ENCODE measurements at regions of chr12 and their contacts with region 1.

Region 1: GRCh38 chr12:15856097-15856982 is 25.8 kb upstream of the STRAP start:
- DNase-seq: peak in 3 of 5 donors; percentile 34 to 55 (median 50)
- H3K4me3 ChIP-seq: no peak overlapping the region
- H3K4me3 Mint-ChIP-seq: no peak overlapping the region
- H3K27ac ChIP-seq: no peak overlapping the region
- H3K27ac Mint-ChIP-seq: no peak overlapping the region
- H3K4me1 ChIP-seq: no peaks in the 10 kb centered on the region
- H3K4me1 Mint-ChIP-seq: no peaks in the 10 kb centered on the region
- H3K27me3 ChIP-seq: peaks cover 10% of the 10 kb centered on the region
- H3K27me3 Mint-ChIP-seq: peaks cover 10 to 30% of the 10 kb centered on the region in 2 donors

Region 2: GRCh38 chr12:15322164-15323061 is 533.9 kb before region 1 on chr12 and contains the start of gene PTPRO:
- CTCF ChIA-PET with region 1: no interaction called
- POLR2A ChIA-PET with region 1: no interaction called
- DNase-seq: no peak
- H3K4me3 ChIP-seq: no peak within 1 kb of the TSS
- H3K4me3 Mint-ChIP-seq: no peak within 1 kb of the TSS
- H3K27ac ChIP-seq: no peak within 1 kb of the TSS
- H3K27ac Mint-ChIP-seq: no peak within 1 kb of the TSS
- H3K4me1 ChIP-seq: no peaks in the 10 kb centered on the region
- H3K4me1 Mint-ChIP-seq: peaks cover 0 to 12% (median 9%) of the 10 kb centered on the region in 3 donors
- H3K27me3 ChIP-seq: peaks cover 3% of the 10 kb centered on the region
- H3K27me3 Mint-ChIP-seq: peaks cover 17 to 50% of the 10 kb centered on the region in 2 donors
- total RNA-seq, gene PTPRO: 0.27 to 0.48 TPM

Region 3: GRCh38 chr12:15590180-15590826 is 266.0 kb before region 1 on chr12:
- CTCF ChIA-PET with region 1: interaction called, 18 read pairs
- POLR2A ChIA-PET with region 1: no interaction called
- DNase-seq: peak; percentile 4 to 65 (median 47)
- H3K4me3 ChIP-seq: peak overlapping the region; percentile 30
- H3K4me3 Mint-ChIP-seq: peak overlapping the region; percentile 2 to 79 (median 67)
- H3K27ac ChIP-seq: no peak overlapping the region
- H3K27ac Mint-ChIP-seq: peak overlapping the region in 4 of 8 donors; percentile 19 to 66 (median 34)
- H3K4me1 ChIP-seq: peaks cover 4% of the 10 kb centered on the region
- H3K4me1 Mint-ChIP-seq: peaks cover 8 to 11% (median 11%) of the 10 kb centered on the region in 3 donors
- H3K27me3 ChIP-seq: no peaks in the 10 kb centered on the region
- H3K27me3 Mint-ChIP-seq: peaks cover 11 to 27% of the 10 kb centered on the region in 2 donors

Region 4: GRCh38 chr12:15772405-15773018 is 83.8 kb before region 1 on chr12:
- CTCF ChIA-PET with region 1: interaction called, 12 read pairs
- POLR2A ChIA-PET with region 1: no interaction called
- DNase-seq: peak in 1 of 5 donors; percentile 7
- H3K4me3 ChIP-seq: no peak overlapping the region
- H3K4me3 Mint-ChIP-seq: no peak overlapping the region
- H3K27ac ChIP-seq: no peak overlapping the region
- H3K27ac Mint-ChIP-seq: no peak overlapping the region
- H3K4me1 ChIP-seq: no peaks in the 10 kb centered on the region
- H3K4me1 Mint-ChIP-seq: no peaks in the 10 kb centered on the region
- H3K27me3 ChIP-seq: no peaks in the 10 kb centered on the region
- H3K27me3 Mint-ChIP-seq: peaks cover 5 to 17% of the 10 kb centered on the region in 2 donors

Region 5: DNA sequence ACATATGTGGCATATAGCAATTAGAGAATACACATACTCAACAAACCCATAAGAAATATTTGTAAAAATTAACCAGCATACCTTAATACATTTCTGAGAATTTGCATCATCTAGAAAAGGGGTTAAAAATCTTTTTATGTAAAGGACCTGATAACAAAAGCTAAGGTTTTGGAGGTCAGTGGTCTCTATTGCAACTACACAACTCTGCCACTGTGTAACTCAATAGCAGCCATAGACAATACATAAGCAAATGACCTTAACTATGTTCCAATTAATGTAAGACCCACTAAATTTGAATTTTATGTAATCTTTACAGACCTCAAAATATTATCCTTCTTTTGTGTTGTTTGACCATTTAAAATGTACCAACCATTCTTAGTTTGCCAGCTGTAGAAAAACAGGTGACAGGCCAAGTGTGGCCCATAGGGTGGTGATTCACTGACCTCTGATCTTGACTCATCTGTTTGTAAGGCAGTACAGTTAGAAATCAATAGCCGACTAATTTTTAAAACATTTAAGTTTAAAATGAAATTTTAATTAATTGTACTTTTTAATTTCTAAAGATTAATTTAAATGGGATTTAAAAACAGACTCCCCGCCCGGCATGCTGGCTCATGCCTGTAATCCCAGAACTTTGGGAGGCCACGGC is 59.7 kb before region 1 on chr12:
- CTCF ChIA-PET with region 1: no interaction called
- POLR2A ChIA-PET with region 1: no interaction called
- DNase-seq: no peak
- H3K4me3 ChIP-seq: no peak overlapping the region
- H3K4me3 Mint-ChIP-seq: no peak overlapping the region
- H3K27ac ChIP-seq: no peak overlapping the region
- H3K27ac Mint-ChIP-seq: no peak overlapping the region
- H3K4me1 ChIP-seq: no peaks in the 10 kb centered on the region
- H3K4me1 Mint-ChIP-seq: no peaks in the 10 kb centered on the region
- H3K27me3 ChIP-seq: no peaks in the 10 kb centered on the region
- H3K27me3 Mint-ChIP-seq: peaks cover 23 to 52% of the 10 kb centered on the region in 2 donors

Region 6: GRCh38 chr12:15819644-15820437 is 36.5 kb before region 1 on chr12:
- CTCF ChIA-PET with region 1: no interaction called
- POLR2A ChIA-PET with region 1: no interaction called
- DNase-seq: no peak
- H3K4me3 ChIP-seq: no peak overlapping the region
- H3K4me3 Mint-ChIP-seq: no peak overlapping the region
- H3K27ac ChIP-seq: no peak overlapping the region
- H3K27ac Mint-ChIP-seq: no peak overlapping the region
- H3K4me1 ChIP-seq: no peaks in the 10 kb centered on the region
- H3K4me1 Mint-ChIP-seq: no peaks in the 10 kb centered on the region
- H3K27me3 ChIP-seq: no peaks in the 10 kb centered on the region
- H3K27me3 Mint-ChIP-seq: peaks cover 19 to 20% of the 10 kb centered on the region in 2 donors